Sciatic nerve (tissue), 2 donors: ENCODE measurements at regions of chr3 and their contacts with region 1.

Region 1: DNA sequence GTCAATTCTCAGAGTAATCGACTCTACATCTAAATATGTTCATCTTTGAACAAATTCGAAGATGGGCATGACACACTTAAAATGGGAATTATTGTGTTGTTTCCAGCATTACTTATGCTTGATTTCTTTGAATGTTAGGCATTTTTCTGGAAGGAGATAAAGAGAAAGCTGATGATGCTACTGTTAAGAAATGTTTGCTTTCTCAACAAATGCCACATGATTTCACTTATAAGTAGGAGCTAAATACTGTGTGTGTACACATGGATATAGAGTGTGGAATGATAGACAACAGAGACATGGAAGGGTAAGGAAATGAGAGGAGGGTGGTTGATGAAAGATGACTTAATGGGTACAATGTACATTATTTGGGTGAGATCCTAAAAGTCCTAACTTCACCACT is 400.9 kb downstream of the TBL1XR1 start:
- DNase-seq: no peak
- ATAC-seq: no peak

Region 2: GRCh38 chr3:176723758-176724393 is 72.5 kb before region 1 on chr3:
- intact Hi-C with region 1: no loop called
- DNase-seq: no peak
- ATAC-seq: no peak

Region 3: GRCh38 chr3:176776622-176777175 is 19.7 kb before region 1 on chr3:
- intact Hi-C with region 1: loop called (anchors 1 kb)
- DNase-seq: no peak
- ATAC-seq: no peak

Region 4: GRCh38 chr3:176840641-176841286 is 44.4 kb after region 1 on chr3:
- intact Hi-C with region 1: no loop called
- DNase-seq: no peak
- ATAC-seq: no peak